T-cell (primary cell): ENCODE measurements at regions of chr9 and their contacts with region 1.

Region 1: DNA sequence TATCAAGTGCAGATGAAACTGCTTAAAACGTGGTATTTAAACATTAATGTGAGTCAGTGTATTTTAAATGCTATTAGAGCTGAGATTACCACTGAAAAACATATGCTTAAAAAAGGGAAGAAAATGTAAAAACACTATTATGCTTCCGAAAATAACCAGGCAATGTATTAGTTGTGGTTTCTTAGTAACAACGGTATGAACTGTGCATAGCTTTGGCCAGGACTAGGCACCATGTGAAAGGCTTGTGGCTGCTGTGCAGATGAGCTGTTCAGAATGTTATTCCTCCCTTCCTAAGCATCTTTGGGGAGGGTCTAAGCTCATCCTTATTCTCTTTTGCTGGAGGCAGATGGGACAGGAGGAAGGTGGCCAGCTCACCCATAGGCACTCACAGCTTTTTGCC is 84.9 kb downstream of the NTRK2 start:
- DNase-seq: no peak
- ATAC-seq: no peak
- H3K4me3 ChIP-seq: no peak overlapping the region
- H3K4me3 Mint-ChIP-seq: no peak overlapping the region
- H3K27ac ChIP-seq: no peak overlapping the region
- H3K27ac Mint-ChIP-seq: no peak overlapping the region
- H3K4me1 ChIP-seq: no peaks in the 10 kb centered on the region
- H3K4me1 Mint-ChIP-seq: peaks cover 0 to 34% (median 8%) of the 10 kb centered on the region in 3 donors
- H3K27me3 ChIP-seq: no peaks in the 10 kb centered on the region
- H3K27me3 Mint-ChIP-seq: no peaks in the 10 kb centered on the region

Region 2: GRCh38 chr9:82861931-82862330 is 1892.5 kb before region 1 on chr9:
- CTCF ChIA-PET with region 1: no interaction called
- POLR2A ChIA-PET with region 1: interaction called in 1 of 2 experiments, 12 read pairs
- DNase-seq: no peak
- ATAC-seq: no peak
- H3K4me3 ChIP-seq: no peak overlapping the region
- H3K4me3 Mint-ChIP-seq: no peak overlapping the region
- H3K27ac ChIP-seq: no peak overlapping the region
- H3K27ac Mint-ChIP-seq: no peak overlapping the region
- H3K4me1 ChIP-seq: no peaks in the 10 kb centered on the region
- H3K4me1 Mint-ChIP-seq: no peaks in the 10 kb centered on the region
- H3K27me3 ChIP-seq: no peaks in the 10 kb centered on the region
- H3K27me3 Mint-ChIP-seq: no peaks in the 10 kb centered on the region

Region 3: GRCh38 chr9:84722388-84722989 is 32.0 kb before region 1 on chr9:
- CTCF ChIA-PET with region 1: no interaction called
- POLR2A ChIA-PET with region 1: no interaction called
- DNase-seq: no peak
- ATAC-seq: no peak
- H3K4me3 ChIP-seq: no peak overlapping the region
- H3K4me3 Mint-ChIP-seq: no peak overlapping the region
- H3K27ac ChIP-seq: no peak overlapping the region
- H3K27ac Mint-ChIP-seq: no peak overlapping the region
- H3K4me1 ChIP-seq: no peaks in the 10 kb centered on the region
- H3K4me1 Mint-ChIP-seq: no peaks in the 10 kb centered on the region
- H3K27me3 ChIP-seq: peaks cover 0 to 4% of the 10 kb centered on the region in 2 experiments
- H3K27me3 Mint-ChIP-seq: peaks cover 3% of the 10 kb centered on the region in 2 donors

Region 4: DNA sequence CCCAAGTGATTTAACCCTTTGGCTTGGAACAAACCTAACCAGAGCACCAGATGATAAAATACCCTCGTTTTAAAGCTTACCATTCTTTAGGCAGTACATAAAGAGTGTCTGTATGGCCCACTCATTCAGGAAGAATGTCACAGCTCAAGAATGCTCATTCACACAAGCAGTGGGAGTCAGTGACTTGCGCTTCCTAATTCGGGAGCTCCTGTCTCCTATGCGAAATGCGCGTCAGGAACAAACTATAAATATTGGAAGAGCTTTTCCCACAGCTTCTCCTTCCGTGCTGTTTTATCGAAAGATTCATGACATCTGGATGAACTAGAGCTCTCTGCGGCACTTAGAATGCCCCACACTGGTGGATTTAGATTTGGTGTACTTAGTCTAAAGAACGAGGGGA is 18.4 kb before region 1 on chr9:
- CTCF ChIA-PET with region 1: no interaction called
- POLR2A ChIA-PET with region 1: no interaction called
- DNase-seq: no peak
- ATAC-seq: no peak
- H3K4me3 ChIP-seq: no peak overlapping the region
- H3K4me3 Mint-ChIP-seq: no peak overlapping the region
- H3K27ac ChIP-seq: no peak overlapping the region
- H3K27ac Mint-ChIP-seq: no peak overlapping the region
- H3K4me1 ChIP-seq: no peaks in the 10 kb centered on the region
- H3K4me1 Mint-ChIP-seq: no peaks in the 10 kb centered on the region
- H3K27me3 ChIP-seq: no peaks in the 10 kb centered on the region
- H3K27me3 Mint-ChIP-seq: no peaks in the 10 kb centered on the region

Region 5: DNA sequence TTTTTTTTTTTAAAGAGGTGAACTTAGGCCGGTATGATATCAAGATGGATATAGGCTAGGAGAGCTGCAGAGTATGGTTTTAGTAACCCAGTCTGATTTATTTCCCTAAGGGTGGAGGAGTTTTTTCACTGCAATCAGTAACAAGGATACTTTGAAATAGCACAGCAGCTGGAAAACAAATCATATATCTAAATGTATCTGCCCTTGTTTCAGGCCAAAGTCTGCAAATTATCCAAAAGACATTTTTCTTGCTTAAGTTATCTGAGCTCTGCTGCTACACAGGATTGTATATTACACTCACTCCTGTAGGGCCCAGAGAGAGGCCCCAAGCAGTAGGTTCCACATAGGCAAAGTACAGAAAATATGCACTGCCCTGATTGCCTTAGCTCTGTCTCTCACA is 137.5 kb after region 1 on chr9:
- CTCF ChIA-PET with region 1: no interaction called
- POLR2A ChIA-PET with region 1: no interaction called
- DNase-seq: no peak
- ATAC-seq: no peak
- H3K4me3 ChIP-seq: no peak overlapping the region
- H3K4me3 Mint-ChIP-seq: no peak overlapping the region
- H3K27ac ChIP-seq: no peak overlapping the region
- H3K27ac Mint-ChIP-seq: no peak overlapping the region
- H3K4me1 ChIP-seq: no peaks in the 10 kb centered on the region
- H3K4me1 Mint-ChIP-seq: no peaks in the 10 kb centered on the region
- H3K27me3 ChIP-seq: no peaks in the 10 kb centered on the region
- H3K27me3 Mint-ChIP-seq: peaks cover 0 to 2% of the 10 kb centered on the region in 2 donors